Stomach (tissue), 19 donors: ENCODE measurements at regions of chr12 and their contacts with region 1.

Region 1: DNA sequence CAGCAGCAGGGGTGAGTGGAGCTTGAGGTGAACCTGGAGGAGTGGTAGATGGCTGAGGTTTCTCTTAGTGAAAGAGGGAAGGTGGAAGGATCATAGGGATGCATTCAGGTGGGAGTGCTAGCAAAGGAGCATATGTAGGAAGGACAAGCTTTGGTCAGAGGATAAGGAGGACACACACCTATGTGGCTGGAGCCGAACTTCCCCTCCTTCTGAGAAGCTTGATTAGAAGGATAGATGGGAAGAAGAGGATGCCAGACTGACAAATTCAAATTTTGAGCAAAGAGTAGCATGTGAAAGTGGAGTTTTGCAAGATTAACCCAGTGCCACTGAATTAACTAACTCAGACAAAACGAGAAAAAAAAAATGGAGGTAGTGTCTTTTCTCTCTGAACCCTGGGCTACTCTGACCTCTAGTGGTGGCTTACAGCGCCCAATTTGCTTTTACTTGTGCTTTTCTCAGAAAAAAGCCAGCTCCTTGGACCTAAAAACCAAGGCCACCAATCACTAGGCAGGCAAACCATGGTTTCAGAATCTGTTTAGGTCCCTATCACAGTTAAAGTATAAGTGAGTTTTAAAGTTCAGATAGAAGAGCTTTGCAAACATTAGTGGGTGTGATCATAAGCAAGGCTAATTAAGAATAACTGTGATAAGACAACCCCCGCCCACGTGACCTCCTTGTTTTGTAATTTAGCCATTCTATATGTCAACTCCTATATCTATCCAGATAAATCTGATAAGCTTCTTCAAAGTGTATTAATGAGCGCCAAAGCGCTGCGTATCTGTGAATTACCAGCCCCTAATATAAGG is 15.5 kb downstream of the EMP1 start:
- DNase-seq: peak; percentile 66 to 91
- H3K4me3 ChIP-seq: no peak overlapping the region
- H3K27ac ChIP-seq: peak overlapping the region in 2 of 5 donors; percentile 12 to 21
- H3K4me1 ChIP-seq: peaks cover 14 to 55% (median 20%) of the 10 kb centered on the region in 4 donors
- H3K27me3 ChIP-seq: no peaks in the 10 kb centered on the region
- CTCF ChIP-seq: peak in 5 of 7 experiments; percentile 63 to 80 (median 74)
- EP300 ChIP-seq: no peak
- POLR2A ChIP-seq: no peak

Region 2: DNA sequence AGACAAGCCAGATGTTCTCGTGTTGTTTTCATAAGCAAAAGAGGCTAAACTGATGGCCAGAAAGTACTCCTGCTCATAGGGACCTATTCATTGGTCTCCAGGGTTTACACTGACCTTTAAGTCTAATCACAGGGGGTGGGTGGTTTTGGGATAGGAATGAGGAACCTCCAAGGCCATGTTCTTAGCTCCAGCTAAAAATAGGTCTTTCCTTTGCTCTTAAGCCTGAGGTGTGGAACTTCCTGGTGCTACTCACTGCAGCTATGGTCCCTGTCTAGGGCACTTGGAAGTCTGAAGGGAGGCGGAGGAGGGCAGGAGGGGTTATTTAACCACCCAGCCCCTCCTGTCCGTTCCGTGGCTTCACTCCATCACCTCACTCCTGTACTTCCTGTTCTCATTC is 302.1 kb before region 1 on chr12:
- intact Hi-C with region 1: loop called (anchors 5 kb)
- DNase-seq: peak in 1 of 2 donors; percentile 50
- H3K4me3 ChIP-seq: no peak overlapping the region
- H3K27ac ChIP-seq: peak overlapping the region in 1 of 5 donors; percentile 26
- H3K4me1 ChIP-seq: peaks cover 0 to 25% (median 7%) of the 10 kb centered on the region in 4 donors
- H3K27me3 ChIP-seq: no peaks in the 10 kb centered on the region
- CTCF ChIP-seq: no peak
- EP300 ChIP-seq: no peak
- POLR2A ChIP-seq: no peak

Region 3: GRCh38 chr12:12999959-13000615 is 212.0 kb before region 1 on chr12 and contains the start of gene HEBP1:
- intact Hi-C with region 1: no loop called
- DNase-seq: peak; percentile 97 to 98
- H3K4me3 ChIP-seq: peak within 1 kb of the TSS; percentile 52 to 80 (median 74)
- H3K27ac ChIP-seq: peak within 1 kb of the TSS; percentile 80 to 94 (median 93)
- H3K4me1 ChIP-seq: peaks cover 27 to 65% (median 53%) of the 10 kb centered on the region in 4 donors
- H3K27me3 ChIP-seq: no peaks in the 10 kb centered on the region
- CTCF ChIP-seq: no peak
- EP300 ChIP-seq: no peak
- POLR2A ChIP-seq: peak in 2 of 4 donors; percentile 19 to 25
- total RNA-seq, gene HEBP1: 0.45 to 43.2 (median 8.2) TPM

Region 4: GRCh38 chr12:13023811-13024530 is 188.1 kb before region 1 on chr12:
- intact Hi-C with region 1: loop called (anchors 10 kb)
- DNase-seq: peak; percentile 31 to 81
- H3K4me3 ChIP-seq: no peak overlapping the region
- H3K27ac ChIP-seq: no peak overlapping the region
- H3K4me1 ChIP-seq: peaks cover 0 to 17% (median 0%) of the 10 kb centered on the region in 4 donors
- H3K27me3 ChIP-seq: no peaks in the 10 kb centered on the region
- CTCF ChIP-seq: peak in 1 of 7 experiments; percentile 28
- EP300 ChIP-seq: no peak
- POLR2A ChIP-seq: no peak

Region 5: DNA sequence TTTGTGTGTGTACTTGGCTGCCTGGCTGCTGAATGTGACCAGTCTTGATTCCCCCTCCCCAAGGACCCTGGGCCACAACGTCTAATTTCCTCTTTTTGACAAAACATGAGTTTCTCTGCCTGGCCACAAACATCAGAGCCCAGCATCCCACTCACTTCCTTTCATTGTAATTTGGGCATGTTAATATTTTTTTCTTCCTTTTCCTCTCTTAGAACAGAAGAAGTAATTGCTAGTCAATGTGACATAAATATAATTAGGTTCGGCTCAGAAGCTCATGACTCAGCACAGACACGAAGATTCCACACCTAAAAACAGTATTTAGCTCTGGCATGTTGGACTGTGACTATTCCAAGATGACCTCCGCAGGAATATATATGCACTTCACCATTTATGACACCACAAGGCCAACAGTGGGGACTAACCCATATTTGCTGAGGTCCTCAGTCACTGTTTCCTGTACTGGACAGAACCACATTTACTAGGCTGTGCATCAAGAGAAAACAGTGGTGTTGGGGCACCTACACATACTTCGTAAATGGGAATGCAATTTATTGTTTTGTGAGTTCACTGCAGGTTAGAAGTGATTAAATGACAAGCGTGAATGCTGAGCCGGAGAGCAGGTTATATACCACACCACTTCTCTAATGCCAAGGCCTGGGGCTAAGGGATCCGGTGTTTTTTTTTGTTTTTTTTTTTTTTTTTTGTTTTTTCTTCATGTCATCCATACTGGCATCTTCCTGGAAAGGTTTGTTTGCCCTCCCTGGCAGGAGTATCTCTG is 112.8 kb before region 1 on chr12:
- intact Hi-C with region 1: loop called (anchors 5 kb)
- DNase-seq: peak in 1 of 2 donors; percentile 58
- H3K4me3 ChIP-seq: no peak overlapping the region
- H3K27ac ChIP-seq: peak overlapping the region; percentile 9 to 95 (median 94)
- H3K4me1 ChIP-seq: peaks cover 18 to 63% (median 46%) of the 10 kb centered on the region in 4 donors
- H3K27me3 ChIP-seq: no peaks in the 10 kb centered on the region
- CTCF ChIP-seq: no peak
- EP300 ChIP-seq: no peak
- POLR2A ChIP-seq: no peak